Ovary (tissue), 10 donors: ENCODE measurements at regions of chr1 and their contacts with region 1.

Region 1: DNA sequence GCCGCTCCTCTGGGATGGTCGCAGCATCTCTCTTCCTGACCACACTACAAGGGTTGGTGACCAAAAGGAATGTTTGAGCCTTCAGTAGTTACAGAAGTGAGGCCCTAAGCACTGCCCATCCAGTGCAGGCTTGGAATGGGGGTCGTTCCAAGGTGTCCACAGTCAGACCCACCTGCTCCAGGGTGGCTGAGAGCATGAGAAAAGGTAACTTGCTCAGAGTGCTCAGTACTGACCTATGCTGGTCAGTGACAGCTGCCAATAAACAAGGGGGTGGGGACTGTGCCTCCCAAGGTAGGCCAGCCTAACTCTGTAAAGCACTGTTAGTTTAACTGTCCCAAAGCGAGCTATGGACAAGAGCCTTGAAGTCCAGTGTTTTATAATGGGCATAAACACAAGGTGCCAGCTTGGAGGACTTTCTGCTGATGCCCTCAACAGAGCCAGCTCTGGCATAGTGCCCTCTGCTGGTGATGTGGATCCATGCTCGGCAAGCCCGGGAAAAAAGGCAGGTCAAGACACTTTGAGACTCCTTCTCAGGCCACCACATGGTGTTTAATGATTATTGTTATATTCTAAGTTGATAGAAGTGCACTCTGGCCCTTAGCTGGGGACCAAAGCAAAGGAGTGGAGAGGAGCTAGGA is 78.1 kb upstream of the DNAH14 start:
- DNase-seq: peak in 4 of 5 donors; percentile 11 to 53 (median 28)
- H3K4me3 ChIP-seq: no peak overlapping the region
- H3K27ac ChIP-seq: no peak overlapping the region
- H3K4me1 ChIP-seq: no peaks in the 10 kb centered on the region
- H3K27me3 ChIP-seq: no peaks in the 10 kb centered on the region
- CTCF ChIP-seq: no peak
- EP300 ChIP-seq: no peak
- POLR2A ChIP-seq: no peak

Region 2: GRCh38 chr1:224513787-224514209 is 337.5 kb before region 1 on chr1:
- intact Hi-C with region 1: loop called (anchors 5 kb)
- DNase-seq: peak; percentile 74 to 89 (median 84)
- H3K4me3 ChIP-seq: no peak overlapping the region
- H3K27ac ChIP-seq: no peak overlapping the region
- H3K4me1 ChIP-seq: no peaks in the 10 kb centered on the region
- H3K27me3 ChIP-seq: no peaks in the 10 kb centered on the region
- CTCF ChIP-seq: peak; percentile 59 to 89 (median 79)
- EP300 ChIP-seq: no peak
- POLR2A ChIP-seq: no peak

Region 3: DNA sequence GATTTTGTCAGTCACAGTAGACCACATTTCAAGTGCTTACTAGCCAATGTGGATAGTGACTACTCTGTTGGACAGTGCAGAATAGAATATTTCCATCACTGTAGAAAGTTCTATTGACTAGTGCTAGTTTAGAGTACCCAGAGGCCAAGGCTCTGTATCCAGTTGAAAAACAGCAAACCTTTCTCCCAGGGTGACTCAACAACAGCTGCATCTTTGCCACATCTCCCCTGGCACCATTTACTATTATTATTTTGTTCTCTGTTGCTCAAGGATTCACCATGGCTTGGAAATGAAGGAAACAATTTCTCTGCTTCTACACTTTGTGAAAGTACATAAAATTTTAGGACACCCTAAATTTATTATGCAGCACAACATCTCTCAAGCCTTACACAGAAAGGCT is 331.5 kb before region 1 on chr1:
- intact Hi-C with region 1: loop called in 1 of 4 experiments (anchors 5 kb)
- DNase-seq: no peak
- H3K4me3 ChIP-seq: no peak overlapping the region
- H3K27ac ChIP-seq: no peak overlapping the region
- H3K4me1 ChIP-seq: no peaks in the 10 kb centered on the region
- H3K27me3 ChIP-seq: no peaks in the 10 kb centered on the region
- CTCF ChIP-seq: no peak
- EP300 ChIP-seq: no peak
- POLR2A ChIP-seq: no peak